ENCODE measurements at regions of chr12 and their contacts with region 1.

Region 1: DNA sequence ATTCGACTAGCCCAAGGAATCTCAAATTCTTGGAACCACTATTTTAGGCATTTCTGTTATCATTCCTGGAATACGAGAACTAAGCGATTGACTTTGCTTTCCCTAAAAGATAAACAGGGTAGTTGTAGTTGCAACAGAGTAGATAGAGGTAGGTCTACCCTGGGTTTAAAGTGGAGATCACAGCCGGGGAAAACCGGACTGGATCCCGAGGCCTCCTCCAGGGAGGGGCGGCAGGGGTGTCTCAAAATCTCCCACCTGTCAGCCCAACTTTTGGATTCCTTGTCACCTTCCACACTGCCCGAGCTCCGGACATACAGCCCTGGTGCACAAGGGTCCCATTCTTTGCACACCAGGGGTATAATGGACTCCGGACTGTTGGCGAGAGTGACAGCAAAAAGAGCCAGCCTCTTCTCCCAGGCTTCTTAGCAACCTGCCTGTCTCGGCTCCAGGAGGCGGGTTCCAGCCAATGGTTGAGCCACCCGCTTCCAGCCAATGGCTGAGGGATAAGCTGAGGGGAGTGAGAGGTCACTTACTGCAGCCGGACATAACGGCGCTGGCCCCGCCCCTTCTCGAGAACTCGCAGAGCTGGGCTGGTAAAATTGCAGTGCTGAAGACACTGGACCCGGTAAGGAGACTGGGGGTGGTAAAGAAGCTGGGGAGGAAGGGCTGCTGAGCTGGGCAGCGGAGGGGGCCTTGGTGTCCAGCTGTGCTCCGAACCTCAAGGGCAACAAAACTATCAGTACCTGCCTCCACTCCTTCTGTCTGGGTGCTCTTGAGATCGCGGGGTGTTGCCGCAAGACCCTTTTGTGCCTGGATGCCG is at the start of gene SUOX:
- DNase-seq: peak in 5 of 14 experiments; percentile 8 to 69 (median 48)
- ATAC-seq: peak; percentile 33
- H3K4me3 ChIP-seq: peak within 1 kb of the TSS; percentile 43
- H3K4me3 Mint-ChIP-seq: peak within 1 kb of the TSS; percentile 51
- H3K27ac ChIP-seq: no peak within 1 kb of the TSS
- H3K27ac Mint-ChIP-seq: no peak within 1 kb of the TSS
- H3K4me1 ChIP-seq: peaks cover 17% of the 10 kb centered on the region
- H3K4me1 Mint-ChIP-seq: peaks cover 23% of the 10 kb centered on the region
- H3K27me3 ChIP-seq: peaks cover 5 to 12% of the 10 kb centered on the region in 2 experiments
- H3K27me3 Mint-ChIP-seq: peaks cover 20% of the 10 kb centered on the region
- CTCF ChIP-seq: no peak
- total RNA-seq, gene SUOX: 0.82 to 1.2 TPM

Region 2: GRCh38 chr12:55467836-55468235 is 529.1 kb before region 1 on chr12:
- CTCF ChIA-PET with region 1: no interaction called
- POLR2A ChIA-PET with region 1: no interaction called
- intact Hi-C with region 1: no loop called
- DNase-seq: no peak
- ATAC-seq: no peak
- H3K4me3 ChIP-seq: no peak overlapping the region
- H3K4me3 Mint-ChIP-seq: no peak overlapping the region
- H3K27ac ChIP-seq: no peak overlapping the region
- H3K27ac Mint-ChIP-seq: no peak overlapping the region
- H3K4me1 ChIP-seq: no peaks in the 10 kb centered on the region
- H3K4me1 Mint-ChIP-seq: no peaks in the 10 kb centered on the region
- H3K27me3 ChIP-seq: no peaks in the 10 kb centered on the region
- H3K27me3 Mint-ChIP-seq: peaks cover 19% of the 10 kb centered on the region
- CTCF ChIP-seq: no peak

Region 3: GRCh38 chr12:55982319-55982936 is 14.5 kb before region 1 on chr12:
- CTCF ChIA-PET with region 1: interaction called, 20 read pairs
- POLR2A ChIA-PET with region 1: interaction called, 4 read pairs
- intact Hi-C with region 1: no loop called
- DNase-seq: no peak
- ATAC-seq: no peak
- H3K4me3 ChIP-seq: no peak overlapping the region
- H3K4me3 Mint-ChIP-seq: no peak overlapping the region
- H3K27ac ChIP-seq: no peak overlapping the region
- H3K27ac Mint-ChIP-seq: no peak overlapping the region
- H3K4me1 ChIP-seq: no peaks in the 10 kb centered on the region
- H3K4me1 Mint-ChIP-seq: peaks cover 30% of the 10 kb centered on the region
- H3K27me3 ChIP-seq: no peaks in the 10 kb centered on the region
- H3K27me3 Mint-ChIP-seq: no peaks in the 10 kb centered on the region
- CTCF ChIP-seq: no peak

Region 4: GRCh38 chr12:56007564-56008559 is 10.9 kb after region 1 on chr12:
- CTCF ChIA-PET with region 1: interaction called, 10 read pairs
- POLR2A ChIA-PET with region 1: interaction called, 13 read pairs
- intact Hi-C with region 1: no loop called
- DNase-seq: peak; percentile 57 to 87 (median 64)
- ATAC-seq: peak; percentile 89
- H3K4me3 ChIP-seq: peak overlapping the region; percentile 70
- H3K4me3 Mint-ChIP-seq: peak overlapping the region; percentile 88
- H3K27ac ChIP-seq: peak overlapping the region; percentile 30 to 36
- H3K27ac Mint-ChIP-seq: peak overlapping the region; percentile 76
- H3K4me1 ChIP-seq: peaks cover 22% of the 10 kb centered on the region
- H3K4me1 Mint-ChIP-seq: peaks cover 19% of the 10 kb centered on the region
- H3K27me3 ChIP-seq: no peaks in the 10 kb centered on the region
- H3K27me3 Mint-ChIP-seq: no peaks in the 10 kb centered on the region
- CTCF ChIP-seq: no peak

Region 5: DNA sequence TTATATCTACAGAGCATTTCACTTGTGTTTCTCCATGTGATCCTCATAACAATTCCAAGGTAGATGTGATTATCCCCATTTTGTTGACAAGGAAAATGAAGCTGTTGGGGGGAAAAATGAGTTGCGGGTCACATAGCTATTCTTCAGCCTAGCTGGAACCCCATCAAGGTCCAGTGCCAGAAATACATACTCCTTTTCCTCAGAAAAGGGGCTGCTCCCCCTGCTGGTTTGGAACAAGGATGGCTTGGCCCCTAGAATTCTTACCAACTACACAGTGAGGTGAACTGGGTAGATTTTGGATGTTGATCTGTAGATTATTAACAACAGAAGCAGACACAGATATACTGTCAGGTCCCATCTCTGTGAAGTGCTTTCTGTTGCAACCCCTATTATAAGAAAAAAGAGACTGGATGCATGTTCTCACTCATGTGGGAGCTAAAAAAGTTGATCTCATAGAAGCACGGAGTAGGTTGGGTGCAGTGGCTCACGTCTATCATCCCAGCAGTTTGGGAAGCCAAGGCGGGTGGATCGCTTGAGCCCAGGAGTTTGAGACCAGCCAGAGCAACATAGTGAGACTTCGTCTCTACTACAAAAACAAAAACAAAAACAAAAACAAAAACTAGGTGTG is 32.9 kb after region 1 on chr12:
- CTCF ChIA-PET with region 1: interaction called, 9 read pairs
- POLR2A ChIA-PET with region 1: no interaction called
- intact Hi-C with region 1: loop called (anchors 1 kb)
- DNase-seq: peak in 12 of 14 experiments; percentile 19 to 72 (median 38)
- ATAC-seq: peak; percentile 56
- H3K4me3 ChIP-seq: no peak overlapping the region
- H3K4me3 Mint-ChIP-seq: no peak overlapping the region
- H3K27ac ChIP-seq: no peak overlapping the region
- H3K27ac Mint-ChIP-seq: peak overlapping the region; percentile 78
- H3K4me1 ChIP-seq: peaks cover 23% of the 10 kb centered on the region
- H3K4me1 Mint-ChIP-seq: peaks cover 27% of the 10 kb centered on the region
- H3K27me3 ChIP-seq: no peaks in the 10 kb centered on the region
- H3K27me3 Mint-ChIP-seq: no peaks in the 10 kb centered on the region
- CTCF ChIP-seq: peak; percentile 69

Region 6: GRCh38 chr12:56413392-56413791 is 416.5 kb after region 1 on chr12:
- CTCF ChIA-PET with region 1: no interaction called
- POLR2A ChIA-PET with region 1: no interaction called
- intact Hi-C with region 1: no loop called
- DNase-seq: no peak
- ATAC-seq: no peak
- H3K4me3 ChIP-seq: no peak overlapping the region
- H3K4me3 Mint-ChIP-seq: no peak overlapping the region
- H3K27ac ChIP-seq: no peak overlapping the region
- H3K27ac Mint-ChIP-seq: no peak overlapping the region
- H3K4me1 ChIP-seq: no peaks in the 10 kb centered on the region
- H3K4me1 Mint-ChIP-seq: no peaks in the 10 kb centered on the region
- H3K27me3 ChIP-seq: no peaks in the 10 kb centered on the region
- H3K27me3 Mint-ChIP-seq: no peaks in the 10 kb centered on the region
- CTCF ChIP-seq: no peak

Measured in CD4-positive, alpha-beta T cell (primary cell).